Right ventricle myocardium inferior (tissue), 1 donor: ENCODE measurements at regions of chrX and their contacts with region 1.

Region 1: DNA sequence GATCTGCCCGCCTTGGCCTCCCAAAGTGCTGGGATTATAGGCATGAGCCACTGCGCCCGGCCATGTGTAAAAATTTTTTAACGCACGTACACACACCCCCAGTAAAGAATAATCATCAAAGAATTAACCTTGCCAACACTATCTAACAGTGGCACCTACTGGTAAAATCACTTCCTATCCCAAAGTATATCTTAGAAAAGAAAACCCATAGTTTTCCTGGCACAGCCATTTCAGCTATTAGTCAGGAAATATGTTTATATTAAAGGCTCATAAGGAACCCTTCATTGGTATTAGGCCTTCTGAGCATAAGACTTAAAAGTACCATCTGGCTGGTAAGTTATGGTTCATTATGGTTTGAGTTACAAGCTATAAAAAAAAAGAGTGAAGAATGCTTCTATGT is 14.1 kb downstream of the S100G start:
- DNase-seq: no peak
- ATAC-seq: peak; percentile 37

Region 2: GRCh38 chrX:16123222-16123786 is 540.8 kb before region 1 on chrX and contains the start of gene GRPR:
- intact Hi-C with region 1: loop called (anchors 2 kb)
- DNase-seq: peak; percentile 76
- ATAC-seq: peak; percentile 76
- total RNA-seq, gene GRPR: 0.19 TPM

Region 3: GRCh38 chrX:16436348-16437188 is 227.5 kb before region 1 on chrX:
- intact Hi-C with region 1: loop called (anchors 2 kb)
- DNase-seq: no peak
- ATAC-seq: peak; percentile 74

Region 4: DNA sequence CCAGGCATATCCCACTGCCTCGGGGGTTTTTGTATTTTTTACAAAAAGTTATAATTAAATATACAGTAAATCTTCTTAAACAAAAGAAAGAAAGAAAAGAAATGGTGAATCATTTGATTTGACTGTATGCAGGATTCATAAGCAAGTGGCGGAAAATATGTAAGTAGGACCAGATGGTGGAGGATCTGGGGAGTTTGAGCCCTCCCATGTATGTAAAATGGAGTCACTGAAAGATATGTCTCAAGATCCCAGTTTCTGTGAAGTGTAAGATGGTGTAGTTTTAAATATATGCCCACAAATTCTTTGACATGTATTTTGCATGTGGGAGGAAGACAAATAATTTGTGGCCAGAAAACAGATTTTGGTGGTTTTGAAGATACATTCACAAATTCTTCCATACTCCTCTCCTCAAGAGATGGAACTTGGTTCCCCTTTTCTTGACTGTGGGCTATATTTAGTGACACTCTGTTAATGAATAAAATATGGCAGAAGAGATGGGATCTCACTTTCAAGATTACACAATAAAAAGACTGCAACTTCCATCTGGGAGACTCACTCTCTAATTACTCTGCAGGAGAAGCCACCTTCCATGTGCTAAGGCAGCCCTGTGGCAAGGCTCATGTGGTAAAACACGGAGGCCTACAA is 147.7 kb before region 1 on chrX:
- intact Hi-C with region 1: no loop called
- DNase-seq: no peak
- ATAC-seq: no peak